HEK293 (cell line): ENCODE measurements at regions of chr1 and their contacts with region 1.

Region 1: DNA sequence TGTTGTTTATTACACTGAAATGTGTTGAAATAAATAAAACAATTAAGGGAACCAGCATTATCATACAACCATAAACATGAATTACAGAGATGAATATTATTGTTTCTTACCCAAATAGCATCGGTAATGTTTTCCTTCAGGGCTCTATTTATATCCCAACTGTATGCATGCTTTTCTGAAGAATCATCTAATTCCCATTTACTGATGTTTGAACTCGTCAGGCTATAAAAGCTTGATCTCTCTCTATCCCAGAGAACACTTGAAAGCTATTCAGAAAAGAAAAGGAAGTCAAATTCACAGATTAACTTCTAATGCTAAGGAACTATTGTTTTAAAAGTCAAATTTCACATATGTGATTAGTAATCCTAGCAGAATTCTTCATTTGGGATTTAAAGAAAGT is 12.4 kb downstream of the NUP133 start:
- H3K4me3 ChIP-seq: no peak overlapping the region
- H3K27ac ChIP-seq: no peak overlapping the region
- H3K4me1 ChIP-seq: no peaks in the 10 kb centered on the region
- CTCF ChIP-seq: no peak

Region 2: GRCh38 chr1:229507951-229508822 is 12.4 kb after region 1 on chr1 and contains the start of gene NUP133:
- CTCF ChIA-PET with region 1: interaction called, 3 read pairs
- POLR2A ChIA-PET with region 1: interaction called, 10 read pairs
- H3K4me3 ChIP-seq: peak within 1 kb of the TSS; percentile 96
- H3K27ac ChIP-seq: peak within 1 kb of the TSS; percentile 85
- H3K4me1 ChIP-seq: peaks cover 7% of the 10 kb centered on the region; the same call in 1 of the 2 replicates
- CTCF ChIP-seq: no peak

Region 3: DNA sequence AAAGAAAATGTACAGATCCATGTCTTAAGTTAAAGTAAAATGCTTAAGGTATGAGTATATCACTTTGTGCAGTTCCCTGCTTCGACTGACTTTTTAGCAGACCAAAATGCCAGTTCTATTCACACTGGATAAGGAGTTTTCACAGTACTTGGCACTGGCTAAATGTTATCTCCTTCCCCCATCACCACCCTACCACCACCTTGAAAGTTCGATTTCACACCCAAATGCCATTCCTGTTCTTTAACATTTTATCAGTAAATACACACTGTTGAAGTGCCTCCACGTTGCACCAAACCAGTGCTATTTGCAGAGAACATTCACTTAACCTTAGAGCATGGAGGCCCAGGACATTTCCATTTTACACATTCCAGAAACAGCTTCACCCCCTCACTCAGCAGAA is 230.3 kb after region 1 on chr1:
- CTCF ChIA-PET with region 1: no interaction called
- POLR2A ChIA-PET with region 1: no interaction called
- H3K4me3 ChIP-seq: no peak overlapping the region
- H3K27ac ChIP-seq: no peak overlapping the region
- H3K4me1 ChIP-seq: no peaks in the 10 kb centered on the region
- CTCF ChIP-seq: no peak

Region 4: GRCh38 chr1:230517786-230518185 is 1022.0 kb after region 1 on chr1:
- CTCF ChIA-PET with region 1: no interaction called
- POLR2A ChIA-PET with region 1: no interaction called
- H3K4me3 ChIP-seq: no peak overlapping the region
- H3K27ac ChIP-seq: no peak overlapping the region
- H3K4me1 ChIP-seq: no peaks in the 10 kb centered on the region
- CTCF ChIP-seq: no peak